Activated CD8-positive, alpha-beta T cell treated with anti-CD3 and anti-CD28 coated beads for 36 hours (primary cell): ENCODE measurements at regions of chr21 and their contacts with region 1.

Region 1: GRCh38 chr21:25607151-25608043 is at the start of gene MRPL39:
- DNase-seq: peak; percentile 92
- ATAC-seq: peak; percentile 94
- H3K4me3 Mint-ChIP-seq: peak within 1 kb of the TSS; percentile 100
- H3K27ac Mint-ChIP-seq: peak within 1 kb of the TSS; percentile 99
- H3K4me1 Mint-ChIP-seq: peaks cover 33% of the 10 kb centered on the region
- H3K27me3 Mint-ChIP-seq: no peaks in the 10 kb centered on the region
- CTCF ChIP-seq: peak; percentile 50
- total RNA-seq, gene MRPL39: 67.1 to 71.0 TPM

Region 2: DNA sequence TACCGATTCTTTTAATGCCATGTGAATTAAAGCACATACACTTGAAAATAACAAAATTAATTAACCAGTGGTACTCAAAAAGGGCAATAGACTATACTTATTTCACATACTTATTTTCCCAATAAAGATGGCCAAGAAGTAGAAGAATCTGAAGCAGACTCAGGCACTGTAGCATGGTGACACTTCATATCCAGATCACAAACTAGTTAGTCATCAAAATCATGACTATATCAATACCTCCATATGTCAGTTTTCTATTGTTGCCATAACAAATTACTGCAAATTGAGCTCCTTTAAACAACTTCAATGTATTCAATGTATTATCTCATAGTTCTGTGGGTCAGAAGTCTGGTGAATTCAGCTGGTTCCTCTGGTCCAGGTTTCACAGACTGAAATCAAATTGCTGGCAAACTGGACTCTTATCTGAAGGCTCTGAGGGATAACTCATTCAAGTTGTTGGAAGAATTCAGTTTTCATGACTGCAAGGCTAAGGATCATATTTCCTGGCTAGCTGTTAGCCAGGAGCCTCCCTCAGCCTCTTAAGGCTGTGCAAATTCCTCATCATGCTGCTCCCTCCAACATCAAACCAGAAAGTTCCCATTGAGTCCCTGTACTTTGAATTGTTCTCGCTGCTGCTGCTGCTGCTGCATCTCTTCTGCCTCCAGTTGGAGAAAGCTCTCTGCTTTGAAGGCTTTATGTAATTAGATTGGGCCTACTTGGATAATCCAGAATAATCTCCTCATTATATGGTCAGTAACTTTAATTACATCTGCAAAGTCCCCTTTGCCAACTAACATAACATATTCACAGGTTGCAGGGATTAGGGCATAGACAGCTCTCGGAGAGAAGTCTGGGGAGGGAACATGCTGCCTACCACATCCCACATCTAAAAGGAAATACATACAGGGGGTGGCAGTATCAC is 91.7 kb before region 1 on chr21:
- CTCF ChIA-PET with region 1: no interaction called
- POLR2A ChIA-PET with region 1: no interaction called
- intact Hi-C with region 1: no loop called
- DNase-seq: no peak
- ATAC-seq: peak; percentile 47
- H3K4me3 Mint-ChIP-seq: no peak overlapping the region
- H3K27ac Mint-ChIP-seq: no peak overlapping the region
- H3K4me1 Mint-ChIP-seq: peaks cover 45% of the 10 kb centered on the region
- H3K27me3 Mint-ChIP-seq: no peaks in the 10 kb centered on the region
- CTCF ChIP-seq: no peak

Region 3: DNA sequence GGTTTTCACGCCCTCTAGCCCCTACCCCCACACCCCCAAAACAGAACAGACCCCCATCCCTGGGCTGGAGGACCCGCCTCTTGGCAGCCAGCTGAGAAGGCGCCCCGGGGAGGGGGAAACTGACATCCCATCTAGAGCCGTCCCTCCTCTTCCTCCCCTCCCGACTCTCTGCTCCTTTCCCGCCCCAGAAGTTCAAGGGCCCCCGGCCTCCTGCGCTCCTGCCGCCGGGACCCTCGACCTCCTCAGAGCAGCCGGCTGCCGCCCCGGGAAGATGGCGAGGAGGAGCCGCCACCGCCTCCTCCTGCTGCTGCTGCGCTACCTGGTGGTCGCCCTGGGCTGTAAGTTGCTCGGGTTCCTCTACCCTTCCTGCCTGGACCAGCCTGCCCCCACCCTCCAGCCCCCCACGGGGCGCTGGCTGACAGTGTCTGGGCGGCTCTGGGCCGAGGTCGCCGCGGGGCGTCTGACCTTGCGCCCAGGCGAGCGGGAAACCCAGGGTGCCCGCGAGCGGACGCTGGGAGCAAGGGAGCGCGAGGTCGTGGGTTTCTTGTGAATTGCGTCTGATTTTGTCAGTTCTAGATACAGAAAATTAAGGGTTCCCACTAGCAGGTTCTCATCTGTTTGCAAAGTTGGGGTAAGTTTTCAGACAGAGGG is 32.3 kb after region 1 on chr21:
- CTCF ChIA-PET with region 1: interaction called, 36 read pairs
- POLR2A ChIA-PET with region 1: interaction called, 6 read pairs
- intact Hi-C with region 1: no loop called
- DNase-seq: peak; percentile 64
- ATAC-seq: peak; percentile 87
- H3K4me3 Mint-ChIP-seq: peak overlapping the region; percentile 71
- H3K27ac Mint-ChIP-seq: no peak overlapping the region
- H3K4me1 Mint-ChIP-seq: peaks cover 16% of the 10 kb centered on the region
- H3K27me3 Mint-ChIP-seq: peaks cover 41% of the 10 kb centered on the region
- CTCF ChIP-seq: peak; percentile 53

Region 4: GRCh38 chr21:25708467-25709065 is 101.2 kb after region 1 on chr21:
- CTCF ChIA-PET with region 1: interaction called, 79 read pairs
- POLR2A ChIA-PET with region 1: interaction called, 3 read pairs
- intact Hi-C with region 1: loop called (anchors 1 kb)
- DNase-seq: peak; percentile 69
- ATAC-seq: peak; percentile 55
- H3K4me3 Mint-ChIP-seq: no peak overlapping the region
- H3K27ac Mint-ChIP-seq: no peak overlapping the region
- H3K4me1 Mint-ChIP-seq: no peaks in the 10 kb centered on the region
- H3K27me3 Mint-ChIP-seq: no peaks in the 10 kb centered on the region
- CTCF ChIP-seq: peak; percentile 90

Region 5: GRCh38 chr21:25722631-25723030 is 115.2 kb after region 1 on chr21:
- CTCF ChIA-PET with region 1: interaction called, 20 read pairs
- POLR2A ChIA-PET with region 1: interaction called, 3 read pairs
- intact Hi-C with region 1: no loop called
- DNase-seq: no peak
- ATAC-seq: no peak
- H3K4me3 Mint-ChIP-seq: no peak overlapping the region
- H3K27ac Mint-ChIP-seq: no peak overlapping the region
- H3K4me1 Mint-ChIP-seq: no peaks in the 10 kb centered on the region
- H3K27me3 Mint-ChIP-seq: no peaks in the 10 kb centered on the region
- CTCF ChIP-seq: no peak

Region 6: DNA sequence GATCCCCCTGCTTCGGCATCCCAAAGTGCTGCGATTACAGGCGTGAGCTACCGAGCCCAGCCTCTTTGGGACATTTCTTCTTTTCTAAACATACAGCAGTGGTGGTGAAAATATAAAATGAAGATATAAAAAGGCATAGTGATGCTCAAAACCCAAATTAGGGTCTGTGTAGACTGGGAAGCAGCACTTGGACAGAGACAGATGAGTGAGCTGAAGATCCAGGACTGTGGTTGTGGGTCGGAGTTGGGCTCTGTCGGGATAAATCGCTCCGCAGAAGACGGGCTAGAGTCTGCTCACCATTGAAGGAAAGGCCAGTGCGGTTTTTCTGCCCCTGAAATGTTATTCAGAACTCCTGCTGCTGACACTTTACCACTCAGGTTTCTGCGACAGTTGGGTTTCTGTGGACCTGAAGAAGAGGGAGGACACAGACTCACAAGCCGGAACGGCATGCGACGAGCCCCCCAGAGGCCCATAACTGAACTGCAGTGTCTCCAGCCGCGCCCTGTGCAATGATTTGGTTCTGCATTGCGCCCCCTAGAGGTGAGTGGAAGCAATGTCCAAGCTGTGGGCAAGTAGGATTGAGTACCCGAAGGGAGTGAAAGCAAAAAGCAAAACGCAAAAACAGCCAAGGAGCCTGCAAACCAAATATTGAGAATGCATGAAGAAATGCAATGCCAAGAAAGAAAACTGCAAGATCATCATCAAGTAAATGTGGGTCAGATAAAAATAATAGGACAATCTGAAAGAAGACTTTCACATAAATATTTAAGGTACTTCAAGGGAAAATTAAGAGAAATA is 194.0 kb after region 1 on chr21:
- CTCF ChIA-PET with region 1: interaction called, 11 read pairs
- POLR2A ChIA-PET with region 1: interaction called, 3 read pairs
- intact Hi-C with region 1: no loop called
- DNase-seq: peak; percentile 94
- ATAC-seq: peak; percentile 100
- H3K4me3 Mint-ChIP-seq: peak overlapping the region; percentile 11
- H3K27ac Mint-ChIP-seq: no peak overlapping the region
- H3K4me1 Mint-ChIP-seq: peaks cover 5% of the 10 kb centered on the region
- H3K27me3 Mint-ChIP-seq: peaks cover 7% of the 10 kb centered on the region
- CTCF ChIP-seq: peak; percentile 97